Heart left ventricle (tissue), 16 donors: ENCODE measurements at regions of chr11 and their contacts with region 1.

Region 1: DNA sequence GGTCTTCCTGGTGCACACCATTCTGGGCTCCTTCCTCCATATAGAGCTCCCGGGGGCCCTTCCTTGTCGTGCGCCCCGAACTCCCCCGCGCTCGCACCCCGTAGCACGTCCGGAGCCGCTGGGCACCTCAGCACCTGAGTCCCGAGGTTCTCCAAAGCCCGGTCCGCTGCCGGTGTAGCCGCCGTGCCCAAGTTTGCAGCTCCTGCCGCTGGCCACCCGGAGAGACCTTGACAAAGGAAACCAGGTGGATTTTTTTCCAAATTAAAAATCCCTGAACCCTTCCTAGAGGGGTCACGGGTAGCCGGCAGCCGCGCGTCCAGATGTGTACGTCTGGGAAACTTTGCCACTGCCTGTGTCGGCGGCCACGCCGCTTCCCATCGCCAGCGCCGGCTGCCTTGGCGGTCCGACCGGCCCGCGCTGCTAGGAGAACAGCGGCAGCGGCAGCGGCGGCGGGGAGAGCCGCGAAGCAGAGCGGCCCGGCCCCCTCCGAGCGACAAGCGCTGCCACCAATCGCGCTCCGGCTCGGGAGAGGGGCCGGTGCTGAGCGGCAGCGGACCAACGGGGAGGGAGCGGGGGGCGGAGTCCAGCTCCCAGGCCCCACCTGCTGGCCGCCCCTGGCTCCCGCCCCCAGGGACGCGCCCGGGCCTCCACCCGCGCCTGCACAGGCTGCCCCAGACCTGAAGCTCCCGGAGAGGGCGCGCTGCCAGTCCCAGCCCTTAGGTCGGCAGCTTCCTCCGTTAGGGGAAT is at the start of gene GALNT18:
- DNase-seq: peak; percentile 94 to 96 (median 95)
- ATAC-seq: peak; percentile 93 to 97 (median 96)
- H3K4me3 ChIP-seq: peak within 1 kb of the TSS; percentile 46 to 85 (median 73)
- H3K27ac ChIP-seq: peak within 1 kb of the TSS; percentile 62 to 86 (median 80)
- H3K4me1 ChIP-seq: peaks cover 0 to 42% (median 12%) of the 10 kb centered on the region in 12 donors
- H3K27me3 ChIP-seq: peaks cover 0 to 26% (median 0%) of the 10 kb centered on the region in 9 donors
- CTCF ChIP-seq: peak; percentile 38 to 76 (median 54)
- POLR2A ChIP-seq: peak in 1 of 2 donors; percentile 92
- total RNA-seq, gene GALNT18: 10.5 to 31.8 (median 17.3) TPM

Region 2: DNA sequence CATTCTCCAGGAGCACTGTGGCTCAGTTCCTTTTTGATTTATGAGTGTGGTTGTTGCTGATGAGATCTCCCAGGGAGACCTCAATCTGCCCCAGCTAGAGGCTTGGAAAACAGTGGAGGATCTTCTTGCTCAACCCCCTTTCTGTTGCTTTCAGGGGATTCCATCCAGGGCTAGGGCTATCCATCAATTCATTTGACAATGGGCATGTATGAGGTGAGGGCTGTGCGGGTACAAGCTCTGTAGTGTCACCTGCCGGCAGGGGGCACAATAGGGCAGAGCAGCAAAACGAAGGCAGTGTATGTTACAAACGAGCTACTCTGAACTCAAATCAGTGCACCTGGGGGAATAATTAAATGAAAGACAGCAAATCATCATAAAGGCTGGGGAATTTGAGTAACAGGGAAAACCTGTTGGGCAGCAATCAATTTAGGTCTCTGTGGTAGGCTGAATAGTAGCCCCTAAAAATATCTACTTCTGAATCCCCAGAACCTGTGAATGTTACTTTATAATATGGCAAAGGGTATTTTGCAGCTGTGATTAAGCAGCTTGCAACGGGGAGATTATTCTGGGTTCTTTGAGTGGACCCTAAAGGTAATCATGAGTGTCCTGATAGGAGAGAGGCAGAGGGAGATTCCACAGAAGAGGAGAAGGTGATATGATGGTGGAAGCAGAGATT is 593.6 kb before region 1 on chr11:
- intact Hi-C with region 1: loop called in 4 of 10 experiments (anchors 5 to 10 kb)
- DNase-seq: peak; percentile 45 to 79 (median 55)
- ATAC-seq: peak in 3 of 4 donors; percentile 69 to 89 (median 71)
- H3K4me3 ChIP-seq: no peak overlapping the region
- H3K27ac ChIP-seq: no peak overlapping the region
- H3K4me1 ChIP-seq: no peaks in the 10 kb centered on the region
- H3K27me3 ChIP-seq: peaks cover 0 to 4% (median 0%) of the 10 kb centered on the region in 9 donors
- CTCF ChIP-seq: peak; percentile 66 to 82 (median 75)
- POLR2A ChIP-seq: no peak

Region 3: DNA sequence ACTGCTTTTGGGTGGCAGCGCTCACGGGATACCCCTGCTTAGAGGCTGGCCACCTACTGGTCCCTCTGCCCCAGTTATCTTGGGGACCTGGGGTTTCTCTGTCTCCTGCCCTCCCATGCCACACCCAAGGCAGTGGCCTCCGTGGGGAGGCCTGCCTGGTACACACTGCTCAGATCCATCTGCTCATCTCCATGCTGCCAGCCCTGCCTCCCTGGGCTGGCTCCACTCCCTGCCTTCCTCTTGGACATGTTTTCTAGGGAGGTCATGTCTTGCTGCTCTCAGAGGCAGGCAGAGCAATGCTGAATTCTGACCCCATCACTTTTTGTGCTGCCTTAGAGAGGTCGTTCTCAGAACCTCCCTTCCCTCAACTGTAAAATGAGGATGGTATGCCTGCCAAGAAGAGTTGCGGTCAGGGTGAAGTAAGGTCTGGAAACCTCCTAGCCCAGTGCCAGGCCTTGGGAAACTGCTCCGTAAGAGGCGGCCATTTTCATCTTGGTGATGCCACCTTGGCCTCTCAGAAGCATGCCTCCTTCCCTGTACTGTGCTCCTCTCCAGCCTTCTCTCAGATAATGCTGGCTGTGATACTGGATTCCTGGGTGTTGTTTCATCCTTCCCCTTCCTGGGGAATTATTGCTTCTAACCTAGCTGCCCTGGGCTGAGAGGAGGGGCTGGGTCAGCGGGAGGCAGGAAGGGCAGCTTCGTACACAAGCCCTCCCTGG is 577.5 kb before region 1 on chr11:
- intact Hi-C with region 1: loop called in 5 of 10 experiments (anchors 5 to 10 kb)
- DNase-seq: no peak
- ATAC-seq: peak in 1 of 4 donors; percentile 27
- H3K4me3 ChIP-seq: no peak overlapping the region
- H3K27ac ChIP-seq: no peak overlapping the region
- H3K4me1 ChIP-seq: no peaks in the 10 kb centered on the region
- H3K27me3 ChIP-seq: no peaks in the 10 kb centered on the region
- CTCF ChIP-seq: no peak
- POLR2A ChIP-seq: no peak

Region 4: GRCh38 chr11:11407065-11407762 is 214.5 kb before region 1 on chr11:
- intact Hi-C with region 1: loop called in 8 of 10 experiments (anchors 5 to 10 kb)
- DNase-seq: peak in 3 of 5 donors; percentile 46 to 66 (median 59)
- ATAC-seq: peak; percentile 66 to 79 (median 74)
- H3K4me3 ChIP-seq: no peak overlapping the region
- H3K27ac ChIP-seq: peak overlapping the region; percentile 2 to 88 (median 55)
- H3K4me1 ChIP-seq: peaks cover 0 to 82% (median 41%) of the 10 kb centered on the region in 12 donors
- H3K27me3 ChIP-seq: peaks cover 0 to 5% (median 0%) of the 10 kb centered on the region in 9 donors
- CTCF ChIP-seq: peak in 7 of 12 donors; percentile 13 to 56 (median 45)
- POLR2A ChIP-seq: no peak

Region 5: GRCh38 chr11:11436715-11437313 is 184.9 kb before region 1 on chr11:
- intact Hi-C with region 1: no loop called
- DNase-seq: peak in 4 of 5 donors; percentile 25 to 67 (median 48)
- ATAC-seq: peak; percentile 79 to 85 (median 84)
- H3K4me3 ChIP-seq: no peak overlapping the region
- H3K27ac ChIP-seq: peak overlapping the region in 4 of 12 donors; percentile 8 to 60 (median 28)
- H3K4me1 ChIP-seq: peaks cover 0 to 24% (median 12%) of the 10 kb centered on the region in 12 donors
- H3K27me3 ChIP-seq: no peaks in the 10 kb centered on the region
- CTCF ChIP-seq: no peak
- POLR2A ChIP-seq: no peak

Region 6: GRCh38 chr11:11538277-11538960 is 83.3 kb before region 1 on chr11:
- intact Hi-C with region 1: loop called (anchors 2 to 10 kb)
- DNase-seq: peak; percentile 80 to 89 (median 84)
- ATAC-seq: peak; percentile 79 to 82 (median 80)
- H3K4me3 ChIP-seq: no peak overlapping the region
- H3K27ac ChIP-seq: peak overlapping the region; percentile 69 to 91 (median 84)
- H3K4me1 ChIP-seq: peaks cover 29 to 90% (median 66%) of the 10 kb centered on the region in 12 donors
- H3K27me3 ChIP-seq: no peaks in the 10 kb centered on the region
- CTCF ChIP-seq: no peak
- POLR2A ChIP-seq: no peak

Region 7: DNA sequence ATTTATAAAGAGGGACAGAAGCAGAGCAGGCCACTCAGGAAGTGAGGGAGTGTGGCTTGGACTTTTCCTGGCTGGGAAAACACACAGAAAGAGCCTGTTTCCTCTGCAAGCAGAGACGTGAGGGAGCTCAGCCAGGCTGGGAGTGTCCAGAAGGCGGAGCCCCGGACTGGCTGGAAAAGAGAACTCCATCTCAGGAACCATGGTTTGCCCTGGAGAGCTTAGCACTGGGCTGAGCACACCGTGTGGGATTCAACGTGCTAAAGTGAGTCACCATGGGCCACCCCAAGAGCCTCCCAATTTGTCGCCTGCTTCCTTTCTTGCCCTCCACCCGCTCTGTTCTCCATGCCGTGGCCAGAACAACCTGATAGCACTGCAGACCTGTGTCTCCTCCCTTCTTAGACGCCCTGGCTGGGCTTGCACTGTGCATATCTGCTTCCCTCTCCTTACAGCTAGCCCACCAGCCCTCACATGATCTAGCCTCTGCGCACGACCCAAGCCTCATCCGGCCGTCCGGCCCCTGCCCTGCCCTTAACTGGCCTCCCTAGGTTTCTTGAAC is 51.7 kb before region 1 on chr11:
- intact Hi-C with region 1: loop called in 1 of 10 experiments (anchors 5 kb)
- DNase-seq: peak; percentile 79 to 84 (median 80)
- ATAC-seq: peak; percentile 74 to 93 (median 90)
- H3K4me3 ChIP-seq: peak overlapping the region in 6 of 12 donors; percentile 8 to 35 (median 26)
- H3K27ac ChIP-seq: peak overlapping the region; percentile 6 to 88 (median 74)
- H3K4me1 ChIP-seq: peaks cover 0 to 84% (median 33%) of the 10 kb centered on the region in 12 donors
- H3K27me3 ChIP-seq: no peaks in the 10 kb centered on the region
- CTCF ChIP-seq: peak in 8 of 12 donors; percentile 17 to 47 (median 28)
- POLR2A ChIP-seq: no peak

Region 8: GRCh38 chr11:11787305-11788062 is 165.7 kb after region 1 on chr11:
- intact Hi-C with region 1: loop called in 7 of 10 experiments (anchors 2 to 10 kb)
- DNase-seq: peak; percentile 55 to 78 (median 62)
- ATAC-seq: peak; percentile 53 to 93 (median 87)
- H3K4me3 ChIP-seq: no peak overlapping the region
- H3K27ac ChIP-seq: no peak overlapping the region
- H3K4me1 ChIP-seq: peaks cover 0 to 6% (median 0%) of the 10 kb centered on the region in 12 donors
- H3K27me3 ChIP-seq: no peaks in the 10 kb centered on the region
- CTCF ChIP-seq: peak; percentile 81 to 97 (median 87)
- POLR2A ChIP-seq: no peak